H1 (cell line): ENCODE measurements at regions of chr2 and their contacts with region 1.

Region 1: GRCh38 chr2:217988014-217988839 is 14.6 kb downstream of the TNS1 start:
- DNase-seq: peak; percentile 81 to 97
- H3K4me3 ChIP-seq: peak overlapping the region in 3 of 4 experiments; percentile 6 to 51 (median 15); a peak in 2 of 8 replicates
- H3K27ac ChIP-seq: peak overlapping the region; percentile 63; the same call in 1 of the 2 replicates
- H3K4me1 ChIP-seq: peaks cover 0 to 12% (median 2%) of the 10 kb centered on the region in 4 experiments; a peak in 4 of 7 replicates
- H3K27me3 ChIP-seq: no peaks in the 10 kb centered on the region; a peak in 1 of 7 replicates
- CTCF ChIP-seq: peak in 2 of 3 experiments; percentile 90 to 92; a peak in 3 of 4 replicates
- EP300 ChIP-seq: peak in 1 of 2 experiments; percentile 91; a peak in 2 of 3 replicates
- POLR2A ChIP-seq: peak in 1 of 2 experiments; percentile 33; a peak in 1 of 3 replicates
- RAD21 ChIP-seq: peak; percentile 94 to 97

Region 2: DNA sequence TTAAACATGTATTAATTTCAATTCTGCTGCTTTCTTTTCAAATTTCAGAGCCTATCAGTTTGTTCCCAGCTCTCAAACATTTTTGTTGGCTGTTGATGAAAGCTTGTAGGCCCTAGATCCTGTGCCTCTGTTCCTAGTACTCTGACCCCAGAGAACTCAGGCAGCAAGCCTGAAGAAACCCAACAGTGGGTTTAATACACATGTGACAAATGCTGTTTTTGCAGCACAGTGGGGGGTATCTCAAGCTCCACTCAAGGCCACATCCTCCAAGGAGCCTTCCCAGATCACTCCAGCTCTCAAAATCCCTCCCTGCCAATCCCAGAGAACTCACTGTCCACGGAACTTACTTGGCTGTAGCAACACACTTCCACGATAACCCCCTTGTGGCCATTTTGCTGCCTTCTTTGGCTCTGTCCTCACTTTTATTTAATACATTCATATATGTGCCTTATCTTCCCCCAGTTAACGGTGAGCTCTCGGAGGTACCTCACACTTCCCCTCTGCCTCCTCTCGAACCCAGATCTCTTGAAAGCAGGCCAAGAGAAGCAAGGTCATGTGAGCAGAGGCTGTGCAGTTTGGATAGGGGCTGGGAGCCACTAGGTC is 107.8 kb before region 1 on chr2:
- CTCF ChIA-PET with region 1: interaction called, 41 read pairs
- POLR2A ChIA-PET with region 1: no interaction called
- DNase-seq: no peak
- H3K4me3 ChIP-seq: no peak overlapping the region
- H3K27ac ChIP-seq: no peak overlapping the region
- H3K4me1 ChIP-seq: peaks cover 0 to 9% (median under 1%) of the 10 kb centered on the region in 4 experiments; a peak in 4 of 7 replicates
- H3K27me3 ChIP-seq: no peaks in the 10 kb centered on the region
- CTCF ChIP-seq: peak in 1 of 3 experiments; percentile 18; a peak in 1 of 4 replicates
- EP300 ChIP-seq: no peak
- POLR2A ChIP-seq: no peak
- RAD21 ChIP-seq: no peak

Region 3: GRCh38 chr2:217899231-217900009 is 88.8 kb before region 1 on chr2:
- CTCF ChIA-PET with region 1: interaction called, 25 read pairs
- POLR2A ChIA-PET with region 1: no interaction called
- DNase-seq: peak; percentile 71 to 93
- H3K4me3 ChIP-seq: no peak overlapping the region
- H3K27ac ChIP-seq: no peak overlapping the region
- H3K4me1 ChIP-seq: peaks cover 0 to 4% (median 2%) of the 10 kb centered on the region in 4 experiments; a peak in 4 of 7 replicates
- H3K27me3 ChIP-seq: no peaks in the 10 kb centered on the region; a peak in 1 of 7 replicates
- CTCF ChIP-seq: peak; percentile 79 to 98 (median 90)
- EP300 ChIP-seq: no peak
- POLR2A ChIP-seq: no peak
- RAD21 ChIP-seq: peak; percentile 51 to 62

Region 4: GRCh38 chr2:217934321-217935131 is 53.7 kb before region 1 on chr2:
- CTCF ChIA-PET with region 1: interaction called, 480 read pairs
- POLR2A ChIA-PET with region 1: interaction called, 3 read pairs
- DNase-seq: no peak
- H3K4me3 ChIP-seq: no peak overlapping the region
- H3K27ac ChIP-seq: 0 out of 2 replicates have a peak overlapping the region, but pooled peaks have one; percentile 33
- H3K4me1 ChIP-seq: peaks cover 11 to 37% (median 23%) of the 10 kb centered on the region in 4 experiments
- H3K27me3 ChIP-seq: no peaks in the 10 kb centered on the region; a peak in 1 of 7 replicates
- CTCF ChIP-seq: no peak
- EP300 ChIP-seq: no peak
- POLR2A ChIP-seq: no peak
- RAD21 ChIP-seq: no peak

Region 5: GRCh38 chr2:217964275-217965161 is 23.7 kb before region 1 on chr2:
- CTCF ChIA-PET with region 1: interaction called, 18 read pairs
- POLR2A ChIA-PET with region 1: no interaction called
- DNase-seq: no peak
- H3K4me3 ChIP-seq: no peak overlapping the region
- H3K27ac ChIP-seq: no peak overlapping the region; the same call in 1 of the 2 replicates
- H3K4me1 ChIP-seq: peaks cover 0 to 13% (median 8%) of the 10 kb centered on the region in 4 experiments; a peak in 6 of 7 replicates
- H3K27me3 ChIP-seq: no peaks in the 10 kb centered on the region
- CTCF ChIP-seq: no peak
- EP300 ChIP-seq: no peak
- POLR2A ChIP-seq: no peak
- RAD21 ChIP-seq: no peak; a peak in 1 of 4 replicates

Region 6: GRCh38 chr2:218033590-218034496 is 45.6 kb after region 1 on chr2:
- CTCF ChIA-PET with region 1: interaction called, 29 read pairs
- POLR2A ChIA-PET with region 1: no interaction called
- DNase-seq: peak in 1 of 2 experiments; percentile 75
- H3K4me3 ChIP-seq: peak overlapping the region; percentile 25 to 63 (median 44); a peak in 7 of 8 replicates
- H3K27ac ChIP-seq: no peak overlapping the region
- H3K4me1 ChIP-seq: peaks cover 0 to 13% (median 5%) of the 10 kb centered on the region in 4 experiments; a peak in 5 of 7 replicates
- H3K27me3 ChIP-seq: peaks cover 6 to 25% (median 20%) of the 10 kb centered on the region in 4 experiments
- CTCF ChIP-seq: no peak
- EP300 ChIP-seq: no peak
- POLR2A ChIP-seq: no peak
- RAD21 ChIP-seq: no peak